ENCODE measurements at regions of chr10 and their contacts with region 1.

Region 1: DNA sequence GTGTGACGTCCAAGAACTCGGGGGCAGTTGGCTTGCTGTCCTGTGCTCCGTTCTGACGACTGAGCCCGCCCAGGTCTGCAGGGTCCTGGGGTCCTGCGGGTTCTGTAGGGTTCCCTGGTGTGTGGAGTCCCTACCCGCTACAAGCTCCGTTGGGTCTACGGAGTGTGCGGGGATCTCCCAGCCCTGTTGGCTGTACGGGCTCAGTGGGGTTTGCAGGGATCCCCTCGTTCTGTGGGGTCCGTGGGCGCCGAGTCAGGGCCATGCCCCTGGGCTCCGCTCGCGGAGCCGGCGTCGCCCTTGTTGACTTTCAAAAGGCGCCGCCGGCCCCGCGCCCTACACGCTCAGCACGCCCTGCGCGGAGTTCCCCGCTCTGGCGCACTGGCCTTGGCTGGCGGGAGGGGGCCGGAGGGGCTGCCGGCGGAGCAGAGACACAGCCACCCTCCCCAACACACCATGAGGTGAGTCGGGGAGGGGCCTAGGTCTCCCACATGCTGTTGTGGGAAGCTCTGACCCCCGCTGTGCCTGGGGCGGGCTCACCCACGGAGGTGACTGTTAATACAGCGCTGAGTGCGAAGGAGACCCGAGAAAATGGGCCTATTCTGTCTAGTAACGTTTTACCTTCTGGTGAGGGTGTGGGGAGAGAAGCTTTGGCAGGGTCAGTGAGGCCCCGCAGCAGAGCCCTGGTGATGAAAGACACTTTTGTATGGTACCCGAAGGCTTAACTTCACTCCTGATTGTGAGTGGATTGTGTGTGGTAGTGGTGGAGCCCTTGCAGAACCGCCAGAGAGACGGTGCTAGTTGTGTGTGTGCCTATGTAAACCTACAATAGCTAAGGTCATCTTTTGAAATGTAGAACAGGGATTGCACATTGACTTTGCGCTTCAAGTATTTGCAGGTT is 8.1 kb downstream of the TASOR2 start:
- DNase-seq: peak; percentile 83
- ATAC-seq: peak; percentile 90
- H3K4me3 ChIP-seq: peak overlapping the region; percentile 8 to 72 (median 54)
- H3K4me3 Mint-ChIP-seq: peak overlapping the region; percentile 92
- H3K27ac ChIP-seq: peak overlapping the region; percentile 40 to 78
- H3K27ac Mint-ChIP-seq: peak overlapping the region; percentile 88
- H3K4me1 ChIP-seq: peaks cover 36 to 55% of the 10 kb centered on the region in 2 donors
- H3K4me1 Mint-ChIP-seq: peaks cover 65% of the 10 kb centered on the region
- H3K27me3 ChIP-seq: no peaks in the 10 kb centered on the region
- H3K27me3 Mint-ChIP-seq: no peaks in the 10 kb centered on the region
- CTCF ChIP-seq: no peak

Region 2: DNA sequence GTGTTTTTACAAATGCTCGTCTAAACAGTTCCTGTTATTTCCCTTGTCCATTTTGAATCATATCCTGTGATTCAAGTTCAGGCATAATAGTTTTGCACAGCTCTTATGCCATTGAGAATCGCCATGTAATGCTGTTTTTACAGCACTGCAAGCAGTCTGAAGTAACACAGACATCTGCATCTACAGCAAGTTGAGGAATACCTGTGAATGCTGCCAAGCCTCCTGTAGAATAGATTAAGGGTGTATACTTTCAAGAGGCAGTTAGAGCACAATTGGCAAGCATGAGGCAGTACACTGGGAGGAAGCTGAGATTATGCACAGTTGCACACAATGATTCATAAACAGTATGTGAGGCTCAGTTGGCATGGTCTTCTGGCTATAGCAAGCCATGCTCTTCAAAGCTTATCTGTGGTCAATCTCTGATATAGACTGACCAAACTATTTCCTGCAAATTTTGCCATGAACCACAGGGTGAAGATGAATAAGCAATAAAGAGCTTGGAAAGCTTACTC is 988.6 kb before region 1 on chr10:
- CTCF ChIA-PET with region 1: no interaction called
- POLR2A ChIA-PET with region 1: no interaction called
- intact Hi-C with region 1: no loop called
- DNase-seq: no peak
- ATAC-seq: no peak
- H3K4me3 ChIP-seq: no peak overlapping the region
- H3K4me3 Mint-ChIP-seq: no peak overlapping the region
- H3K27ac ChIP-seq: no peak overlapping the region
- H3K27ac Mint-ChIP-seq: no peak overlapping the region
- H3K4me1 ChIP-seq: peaks cover 0 to 6% of the 10 kb centered on the region in 2 donors
- H3K4me1 Mint-ChIP-seq: peaks cover 6% of the 10 kb centered on the region
- H3K27me3 ChIP-seq: peaks cover 0 to 3% (median 0%) of the 10 kb centered on the region in 4 experiments
- H3K27me3 Mint-ChIP-seq: peaks cover 4% of the 10 kb centered on the region
- CTCF ChIP-seq: no peak

Region 3: DNA sequence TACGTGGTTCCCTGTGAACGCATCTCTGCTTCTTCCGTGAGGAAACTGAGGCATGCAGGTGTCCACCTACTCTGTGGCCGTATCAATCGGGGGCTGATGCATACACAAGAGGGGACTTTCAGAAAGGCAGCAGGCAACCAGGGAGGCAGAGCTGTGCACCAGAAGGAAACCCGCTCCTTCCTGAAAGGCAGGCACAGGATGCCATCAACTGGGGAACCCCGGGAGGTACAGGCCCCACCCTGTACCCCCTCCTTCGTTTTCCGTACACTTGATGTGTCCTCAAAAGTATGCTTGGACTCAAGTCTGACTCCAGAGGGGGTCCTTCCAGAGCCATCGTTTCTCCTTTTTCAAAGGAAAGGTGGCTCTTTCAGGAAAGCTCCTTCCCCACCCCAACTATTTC is 85.8 kb before region 1 on chr10:
- CTCF ChIA-PET with region 1: no interaction called
- POLR2A ChIA-PET with region 1: interaction called, 11 read pairs
- intact Hi-C with region 1: no loop called
- DNase-seq: no peak
- ATAC-seq: no peak
- H3K4me3 ChIP-seq: no peak overlapping the region
- H3K4me3 Mint-ChIP-seq: no peak overlapping the region
- H3K27ac ChIP-seq: no peak overlapping the region
- H3K27ac Mint-ChIP-seq: no peak overlapping the region
- H3K4me1 ChIP-seq: no peaks in the 10 kb centered on the region
- H3K4me1 Mint-ChIP-seq: no peaks in the 10 kb centered on the region
- H3K27me3 ChIP-seq: peaks cover 0 to 18% (median 2%) of the 10 kb centered on the region in 4 experiments
- H3K27me3 Mint-ChIP-seq: peaks cover 17% of the 10 kb centered on the region
- CTCF ChIP-seq: no peak

Region 4: DNA sequence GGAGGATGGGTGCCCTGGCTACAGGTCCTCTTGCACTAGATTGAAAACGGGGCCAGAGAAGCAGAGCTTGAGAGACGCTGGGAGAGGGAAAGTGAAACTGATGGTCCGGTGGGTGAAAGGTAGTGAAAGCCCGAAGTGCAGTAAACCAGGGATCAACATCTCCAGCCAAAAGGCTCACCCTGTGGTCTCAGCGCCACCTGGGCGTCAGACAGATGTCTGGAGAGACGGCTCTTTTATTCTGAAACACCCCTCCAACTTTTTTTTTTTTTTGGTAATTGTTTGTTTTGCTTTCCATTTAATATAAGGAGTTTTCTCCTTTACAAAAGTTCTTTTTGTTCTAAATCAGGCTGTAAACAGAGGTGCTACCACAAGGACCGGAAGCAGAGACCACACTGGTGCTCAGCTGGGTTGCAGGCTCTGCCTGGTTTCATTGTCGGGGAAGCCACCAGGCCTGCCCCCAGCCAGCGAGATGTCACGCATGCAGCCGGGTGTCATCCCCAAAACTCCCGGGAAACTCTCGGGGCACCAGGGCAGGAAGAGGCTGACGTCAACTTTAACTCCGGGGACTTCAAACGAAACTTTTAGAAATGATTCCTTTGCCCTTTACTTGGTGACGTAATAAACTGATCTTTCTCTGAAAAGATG is 358.2 kb after region 1 on chr10:
- CTCF ChIA-PET with region 1: no interaction called
- POLR2A ChIA-PET with region 1: no interaction called
- intact Hi-C with region 1: no loop called
- DNase-seq: peak; percentile 96
- ATAC-seq: peak; percentile 66
- H3K4me3 ChIP-seq: peak overlapping the region; percentile 35 to 63 (median 55)
- H3K4me3 Mint-ChIP-seq: peak overlapping the region; percentile 91
- H3K27ac ChIP-seq: peak overlapping the region; percentile 92
- H3K27ac Mint-ChIP-seq: peak overlapping the region; percentile 99
- H3K4me1 ChIP-seq: peaks cover 69 to 82% of the 10 kb centered on the region in 2 donors
- H3K4me1 Mint-ChIP-seq: peaks cover 87% of the 10 kb centered on the region
- H3K27me3 ChIP-seq: no peaks in the 10 kb centered on the region
- H3K27me3 Mint-ChIP-seq: no peaks in the 10 kb centered on the region
- CTCF ChIP-seq: peak; percentile 35

Region 5: GRCh38 chr10:6786579-6787031 is 1093.9 kb after region 1 on chr10:
- CTCF ChIA-PET with region 1: no interaction called
- POLR2A ChIA-PET with region 1: no interaction called
- intact Hi-C with region 1: no loop called
- DNase-seq: no peak
- ATAC-seq: no peak
- H3K4me3 ChIP-seq: no peak overlapping the region
- H3K4me3 Mint-ChIP-seq: no peak overlapping the region
- H3K27ac ChIP-seq: no peak overlapping the region
- H3K27ac Mint-ChIP-seq: no peak overlapping the region
- H3K4me1 ChIP-seq: peaks cover 6% of the 10 kb centered on the region in 2 donors
- H3K4me1 Mint-ChIP-seq: peaks cover 8% of the 10 kb centered on the region
- H3K27me3 ChIP-seq: peaks cover 0 to 7% (median 1%) of the 10 kb centered on the region in 4 experiments
- H3K27me3 Mint-ChIP-seq: peaks cover 22% of the 10 kb centered on the region
- CTCF ChIP-seq: no peak